IMR-90 (cell line): ENCODE measurements at regions of chr3 and their contacts with region 1.

Region 1: GRCh38 chr3:51710641-51711351 is 3.9 kb downstream of the GRM2 start:
- DNase-seq: no peak
- ATAC-seq: no peak
- H3K4me3 ChIP-seq: no peak overlapping the region
- H3K27ac ChIP-seq: no peak overlapping the region
- H3K4me1 ChIP-seq: no peaks in the 10 kb centered on the region
- H3K27me3 ChIP-seq: peaks cover 15% of the 10 kb centered on the region; the same call in 1 of the 2 replicates
- CTCF ChIP-seq: no peak
- POLR2A ChIP-seq: no peak
- RAD21 ChIP-seq: no peak

Region 2: DNA sequence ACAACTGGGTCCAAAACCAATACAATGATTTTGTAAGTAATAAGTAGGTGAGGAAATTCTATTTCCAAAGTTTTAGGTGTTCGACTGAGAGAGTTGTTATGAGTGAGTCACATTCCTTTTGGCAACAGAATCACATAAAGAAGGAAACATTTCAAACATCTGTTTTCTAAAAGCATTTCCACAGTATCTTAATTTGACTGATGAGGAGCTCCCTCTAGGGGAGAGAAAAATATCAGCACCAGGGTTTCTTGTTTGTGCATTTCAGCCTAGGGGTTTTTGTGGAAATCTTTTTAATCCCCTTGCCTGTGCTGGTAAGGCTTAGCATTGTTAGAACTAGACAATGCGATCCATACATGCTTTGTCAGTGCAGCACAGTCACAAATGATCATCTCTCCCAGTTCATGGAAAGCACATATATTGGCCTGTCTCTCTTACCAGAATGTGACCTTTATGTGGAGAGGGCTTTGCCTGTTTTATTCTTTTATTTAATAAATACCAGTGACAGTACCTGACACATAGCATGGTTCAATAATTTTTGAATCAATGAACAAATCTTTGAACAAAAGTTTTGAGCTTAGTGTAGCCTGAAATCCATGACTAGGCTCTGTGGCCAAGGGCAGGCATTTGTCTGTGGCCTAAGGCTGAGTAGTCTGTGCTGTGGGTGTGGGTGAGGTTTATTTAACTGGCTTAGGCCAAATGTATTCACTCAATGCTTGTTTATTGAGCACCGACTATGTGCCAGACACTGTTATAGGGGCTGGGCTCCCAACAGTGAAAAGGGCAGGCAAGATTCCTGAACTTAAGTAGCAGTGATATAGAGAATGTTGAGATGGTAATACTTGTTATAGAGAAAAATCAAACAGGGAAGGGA is 89.3 kb after region 1 on chr3:
- CTCF ChIA-PET with region 1: no interaction called
- POLR2A ChIA-PET with region 1: no interaction called
- dilution Hi-C with region 1: no loop called
- in situ Hi-C with region 1: no loop called
- intact Hi-C with region 1: loop called (anchors 5 kb)
- DNase-seq: peak; percentile 82
- ATAC-seq: peak; percentile 85
- H3K4me3 ChIP-seq: no peak overlapping the region
- H3K27ac ChIP-seq: no peak overlapping the region
- H3K4me1 ChIP-seq: no peaks in the 10 kb centered on the region
- H3K27me3 ChIP-seq: peaks cover 9% of the 10 kb centered on the region
- CTCF ChIP-seq: peak; percentile 77
- POLR2A ChIP-seq: no peak
- RAD21 ChIP-seq: peak; percentile 63